CD14-positive monocyte (primary cell): ENCODE measurements at regions of chr11 and their contacts with region 1.

Region 1: DNA sequence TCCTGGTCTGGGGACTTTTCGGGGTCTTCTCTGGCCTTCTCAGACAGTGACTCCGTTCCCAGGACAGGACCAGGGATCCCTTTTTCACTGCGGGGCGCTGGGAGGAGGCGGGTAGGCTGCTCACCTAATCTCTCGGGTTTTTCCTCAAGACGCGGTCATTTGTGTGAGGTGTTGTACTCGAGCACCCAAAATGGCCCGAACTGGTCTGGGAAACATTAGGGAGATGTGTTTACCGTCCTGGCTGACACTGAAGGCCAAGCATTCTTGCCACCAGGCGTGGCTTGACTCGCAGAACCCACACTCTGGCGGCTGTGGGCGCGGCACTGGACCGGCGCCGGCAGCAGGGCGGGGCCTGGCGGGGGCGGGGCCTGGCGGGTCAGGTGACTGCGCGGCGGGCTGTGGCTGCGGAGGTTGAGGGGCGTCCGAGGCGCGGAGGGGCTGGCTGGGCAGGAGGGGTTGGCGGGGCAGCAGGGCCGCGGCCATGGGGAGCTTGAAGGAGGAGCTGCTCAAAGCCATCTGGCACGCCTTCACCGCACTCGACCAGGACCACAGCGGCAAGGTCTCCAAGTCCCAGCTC is at the start of gene SWAP70:
- DNase-seq: peak; percentile 69 to 71 (median 71)
- H3K4me3 ChIP-seq: peak within 1 kb of the TSS; percentile 78 to 95 (median 95)
- H3K4me3 Mint-ChIP-seq: peak within 1 kb of the TSS; percentile 96 to 98
- H3K27ac ChIP-seq: peak within 1 kb of the TSS; percentile 68 to 87
- H3K27ac Mint-ChIP-seq: peak within 1 kb of the TSS; percentile 93 to 98 (median 97)
- H3K4me1 ChIP-seq: peaks cover 39 to 49% of the 10 kb centered on the region in 2 donors
- H3K4me1 Mint-ChIP-seq: peaks cover 55% of the 10 kb centered on the region
- H3K27me3 ChIP-seq: no peaks in the 10 kb centered on the region
- H3K27me3 Mint-ChIP-seq: no peaks in the 10 kb centered on the region
- CTCF ChIP-seq: no peak
- polyA plus RNA-seq, gene SWAP70: 10.9 to 26.4 (median 13.8) TPM

Region 2: DNA sequence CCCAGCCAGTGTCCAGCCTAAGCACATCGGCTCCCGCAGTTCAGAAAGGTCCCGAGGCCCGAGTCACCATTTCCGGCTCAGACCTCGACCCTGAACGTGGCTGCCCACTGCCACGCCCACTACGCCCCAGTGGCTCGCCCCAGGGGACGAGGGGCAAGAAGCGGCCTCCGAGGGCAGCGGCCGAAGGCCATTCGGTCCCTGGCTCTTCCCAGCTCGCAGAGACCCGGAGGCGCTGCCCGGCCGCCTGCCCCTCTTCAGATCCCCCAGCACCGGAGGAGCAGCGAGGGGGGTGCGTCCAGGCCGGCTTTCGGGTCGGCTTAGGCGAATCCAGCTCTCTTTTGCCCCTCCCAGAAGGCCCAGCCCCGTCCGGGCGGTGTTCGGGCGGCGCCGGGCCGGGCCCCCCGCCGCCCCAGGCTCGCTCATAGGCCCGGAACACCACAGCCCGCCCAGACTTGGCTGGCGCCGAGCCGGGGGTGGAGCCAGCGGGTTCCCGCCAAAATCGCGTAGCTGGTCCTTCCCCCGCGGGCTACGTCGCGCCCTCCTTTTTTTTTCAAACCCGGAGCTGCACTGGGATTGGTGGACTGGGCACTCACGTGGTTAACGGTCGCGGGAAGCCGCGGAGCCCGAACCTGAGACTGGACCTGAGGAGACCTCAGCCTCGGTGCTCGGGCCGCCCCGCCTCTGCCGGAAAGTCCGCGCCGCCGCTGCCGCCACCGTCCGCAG is 90.6 kb before region 1 on chr11 and contains the start of gene WEE1:
- intact Hi-C with region 1: loop called in 1 of 2 experiments (anchors 10 kb)
- DNase-seq: peak; percentile 91 to 93 (median 92)
- H3K4me3 ChIP-seq: peak within 1 kb of the TSS; percentile 74 to 93 (median 78)
- H3K4me3 Mint-ChIP-seq: peak within 1 kb of the TSS; percentile 97 to 98
- H3K27ac ChIP-seq: peak within 1 kb of the TSS; percentile 83
- H3K27ac Mint-ChIP-seq: peak within 1 kb of the TSS; percentile 60 to 93 (median 88)
- H3K4me1 ChIP-seq: peaks cover 10 to 27% of the 10 kb centered on the region in 2 donors
- H3K4me1 Mint-ChIP-seq: peaks cover 38% of the 10 kb centered on the region
- H3K27me3 ChIP-seq: no peaks in the 10 kb centered on the region
- H3K27me3 Mint-ChIP-seq: peaks cover 0 to 3% (median 0%) of the 10 kb centered on the region in 3 donors
- CTCF ChIP-seq: no peak
- polyA plus RNA-seq, gene WEE1: 0.05 to 0.41 (median 0.22) TPM

Region 3: DNA sequence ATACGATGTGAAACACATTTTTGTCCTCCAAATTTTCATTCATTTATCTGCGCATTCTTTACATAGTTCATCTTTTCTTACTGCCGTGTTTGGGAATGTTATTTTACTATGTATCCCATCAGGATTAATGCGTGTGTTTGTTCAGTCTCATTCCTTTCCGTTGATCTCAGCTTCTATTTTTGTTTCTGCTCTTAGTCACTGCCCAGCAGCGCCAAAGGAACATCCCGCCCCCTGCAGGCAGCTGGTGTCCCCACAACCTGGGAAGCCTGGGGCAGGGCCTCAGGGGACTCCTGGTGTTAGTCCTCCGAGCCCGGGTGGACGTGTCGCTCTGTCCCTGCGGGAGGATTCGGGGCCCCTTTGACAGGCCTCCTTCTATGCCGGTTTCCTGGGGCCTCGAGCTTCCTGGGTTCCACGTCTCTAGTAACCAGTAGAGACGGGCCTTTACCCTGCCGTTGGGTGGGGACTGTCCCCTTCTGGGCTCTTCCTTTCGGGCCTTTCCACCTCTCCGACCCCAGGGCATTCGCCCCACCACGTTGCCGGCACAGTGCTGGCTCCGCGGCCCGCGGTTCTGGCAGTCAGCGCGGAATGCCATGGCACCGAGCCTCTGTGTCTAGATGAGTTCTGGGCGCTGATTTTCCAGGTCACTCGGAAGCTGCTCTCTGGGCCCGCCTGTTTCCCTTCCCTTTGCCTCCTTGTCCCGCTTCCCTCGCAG is 50.5 kb before region 1 on chr11:
- intact Hi-C with region 1: loop called (anchors 1 to 10 kb)
- DNase-seq: peak; percentile 78 to 87 (median 85)
- H3K4me3 ChIP-seq: peak overlapping the region; percentile 36 to 84 (median 67)
- H3K4me3 Mint-ChIP-seq: peak overlapping the region; percentile 93 to 100
- H3K27ac ChIP-seq: peak overlapping the region; percentile 55 to 77
- H3K27ac Mint-ChIP-seq: peak overlapping the region; percentile 86 to 96 (median 92)
- H3K4me1 ChIP-seq: peaks cover 12 to 33% of the 10 kb centered on the region in 2 donors
- H3K4me1 Mint-ChIP-seq: peaks cover 25% of the 10 kb centered on the region
- H3K27me3 ChIP-seq: no peaks in the 10 kb centered on the region
- H3K27me3 Mint-ChIP-seq: peaks cover 0 to 6% (median 4%) of the 10 kb centered on the region in 3 donors
- CTCF ChIP-seq: peak; percentile 87

Region 4: GRCh38 chr11:9639985-9640384 is 23.8 kb before region 1 on chr11:
- intact Hi-C with region 1: loop called in 1 of 2 experiments (anchors 2 kb)
- DNase-seq: peak; percentile 74 to 95 (median 90)
- H3K4me3 ChIP-seq: peak overlapping the region in 1 of 3 experiments; percentile 9
- H3K4me3 Mint-ChIP-seq: no peak overlapping the region
- H3K27ac ChIP-seq: peak overlapping the region; percentile 49 to 81
- H3K27ac Mint-ChIP-seq: peak overlapping the region; percentile 90 to 96 (median 95)
- H3K4me1 ChIP-seq: peaks cover 41 to 50% of the 10 kb centered on the region in 2 donors
- H3K4me1 Mint-ChIP-seq: peaks cover 46% of the 10 kb centered on the region
- H3K27me3 ChIP-seq: no peaks in the 10 kb centered on the region
- H3K27me3 Mint-ChIP-seq: peaks cover 0 to 1% (median 0%) of the 10 kb centered on the region in 3 donors
- CTCF ChIP-seq: no peak

Region 5: DNA sequence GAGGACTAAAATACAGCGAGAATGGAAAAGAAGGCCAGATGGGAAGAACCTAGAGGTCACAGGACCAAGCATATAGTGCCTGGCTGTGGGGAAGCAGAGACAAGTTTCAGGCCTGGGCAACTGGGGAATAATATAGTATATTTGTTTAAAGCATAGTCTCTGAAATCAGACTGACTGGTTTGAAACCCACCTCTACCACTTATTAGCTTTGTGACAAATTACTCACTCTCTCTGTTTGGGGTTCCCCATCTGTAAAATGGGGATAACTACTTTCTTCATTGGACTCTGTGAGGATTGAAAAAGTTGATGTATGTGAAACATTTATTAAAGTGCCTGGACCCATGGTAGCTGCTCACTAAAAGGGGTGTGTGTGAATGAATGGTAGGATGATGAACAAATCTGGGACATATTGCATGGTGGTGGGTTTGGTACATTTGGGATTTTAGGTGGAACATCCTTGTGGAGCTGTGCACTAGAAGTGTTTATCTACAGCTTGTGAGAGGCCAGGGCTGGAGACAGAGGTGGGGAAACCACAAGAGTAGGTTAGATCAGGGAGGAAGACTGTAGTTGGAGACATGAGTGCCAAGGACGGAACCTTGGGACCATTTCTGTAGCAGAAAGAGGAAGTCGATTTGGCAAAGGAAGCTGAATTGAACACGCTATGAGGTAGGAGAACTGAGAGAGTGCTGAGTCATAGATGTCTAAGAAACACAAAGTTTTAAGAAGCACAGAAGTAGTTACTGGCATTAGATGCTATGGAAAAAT is 52.7 kb after region 1 on chr11:
- intact Hi-C with region 1: loop called in 1 of 2 experiments (anchors 10 kb)
- DNase-seq: peak; percentile 81 to 92 (median 92)
- H3K4me3 ChIP-seq: peak overlapping the region in 1 of 3 experiments; percentile 62
- H3K4me3 Mint-ChIP-seq: peak overlapping the region; percentile 17 to 73
- H3K27ac ChIP-seq: peak overlapping the region in 1 of 2 donors; percentile 76
- H3K27ac Mint-ChIP-seq: peak overlapping the region; percentile 79 to 92 (median 88)
- H3K4me1 ChIP-seq: peaks cover 40 to 43% of the 10 kb centered on the region in 2 donors
- H3K4me1 Mint-ChIP-seq: peaks cover 44% of the 10 kb centered on the region
- H3K27me3 ChIP-seq: no peaks in the 10 kb centered on the region
- H3K27me3 Mint-ChIP-seq: no peaks in the 10 kb centered on the region
- CTCF ChIP-seq: no peak

Region 6: DNA sequence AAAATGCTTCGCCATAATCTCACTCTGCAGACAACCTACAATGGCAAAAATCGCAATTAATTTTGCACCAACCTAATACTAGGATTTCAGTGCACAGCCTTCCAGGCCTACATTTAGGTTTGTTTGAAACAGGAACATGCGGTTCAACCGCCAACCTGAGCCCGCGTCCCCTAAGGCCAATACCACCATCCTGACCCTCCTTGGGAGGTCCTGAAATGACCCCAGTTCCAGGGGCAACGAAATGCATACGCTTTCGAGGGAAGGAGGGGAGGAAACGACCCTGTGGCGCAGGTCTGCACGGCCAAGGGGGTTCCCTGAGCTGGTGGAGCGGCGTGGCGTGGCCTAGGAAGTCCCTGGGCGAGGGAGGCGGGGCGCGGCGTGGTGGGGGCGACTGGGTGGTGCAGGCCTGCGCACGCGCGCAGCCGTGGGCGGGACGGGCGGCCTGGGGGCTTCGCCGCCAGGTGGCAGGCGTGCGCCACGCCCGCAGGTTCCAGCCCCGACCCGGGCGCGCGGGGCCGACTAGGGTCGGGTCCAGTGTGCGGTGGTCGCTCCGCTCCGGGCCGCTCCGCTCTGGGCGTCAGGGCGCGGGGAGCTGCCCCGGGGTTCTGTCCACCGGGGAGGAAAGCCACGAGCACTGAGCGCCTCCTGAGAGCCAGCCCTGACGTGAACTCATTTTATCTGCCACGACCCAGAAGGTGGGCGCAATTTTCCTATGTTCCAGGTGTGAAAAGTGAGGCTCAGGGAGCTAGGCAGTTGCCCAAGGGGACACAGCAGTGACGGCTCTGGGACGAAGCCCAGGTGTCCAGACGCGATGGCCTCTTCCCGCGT is 94.2 kb after region 1 on chr11:
- intact Hi-C with region 1: loop called in 1 of 2 experiments (anchors 10 kb)
- DNase-seq: peak; percentile 78 to 92 (median 84)
- H3K4me3 ChIP-seq: peak overlapping the region; percentile 50 to 82 (median 66)
- H3K4me3 Mint-ChIP-seq: peak overlapping the region; percentile 76 to 91
- H3K27ac ChIP-seq: peak overlapping the region in 1 of 2 donors; percentile 75
- H3K27ac Mint-ChIP-seq: peak overlapping the region; percentile 38 to 91 (median 79)
- H3K4me1 ChIP-seq: peaks cover 19 to 24% of the 10 kb centered on the region in 2 donors
- H3K4me1 Mint-ChIP-seq: peaks cover 41% of the 10 kb centered on the region
- H3K27me3 ChIP-seq: no peaks in the 10 kb centered on the region
- H3K27me3 Mint-ChIP-seq: peaks cover 5 to 8% (median 7%) of the 10 kb centered on the region in 3 donors
- CTCF ChIP-seq: peak; percentile 92